ENCODE measurements at regions of chr1 and their contacts with region 1.

Region 1: GRCh38 chr1:39720094-39720999 is 18.3 kb upstream of the PPIE start:
- DNase-seq: no peak
- H3K4me3 ChIP-seq: no peak overlapping the region
- H3K27ac ChIP-seq: no peak overlapping the region
- H3K4me1 ChIP-seq: peaks cover 0 to 3% (median 0%) of the 10 kb centered on the region in 4 donors
- H3K27me3 ChIP-seq: peaks cover 70% of the 10 kb centered on the region
- CTCF ChIP-seq: peak; percentile 65 to 80 (median 78)
- EP300 ChIP-seq: no peak
- POLR2A ChIP-seq: no peak

Region 2: GRCh38 chr1:37931361-37932158 is 1788.8 kb before region 1 on chr1:
- in situ Hi-C with region 1: no loop called
- intact Hi-C with region 1: loop called (anchors 5 kb)
- DNase-seq: peak; percentile 98
- H3K4me3 ChIP-seq: peak overlapping the region; percentile 52 to 97 (median 76)
- H3K27ac ChIP-seq: peak overlapping the region; percentile 70 to 85 (median 73)
- H3K4me1 ChIP-seq: peaks cover 8 to 24% (median 15%) of the 10 kb centered on the region in 4 donors
- H3K27me3 ChIP-seq: no peaks in the 10 kb centered on the region
- CTCF ChIP-seq: no peak
- EP300 ChIP-seq: no peak
- POLR2A ChIP-seq: peak; percentile 50

Region 3: DNA sequence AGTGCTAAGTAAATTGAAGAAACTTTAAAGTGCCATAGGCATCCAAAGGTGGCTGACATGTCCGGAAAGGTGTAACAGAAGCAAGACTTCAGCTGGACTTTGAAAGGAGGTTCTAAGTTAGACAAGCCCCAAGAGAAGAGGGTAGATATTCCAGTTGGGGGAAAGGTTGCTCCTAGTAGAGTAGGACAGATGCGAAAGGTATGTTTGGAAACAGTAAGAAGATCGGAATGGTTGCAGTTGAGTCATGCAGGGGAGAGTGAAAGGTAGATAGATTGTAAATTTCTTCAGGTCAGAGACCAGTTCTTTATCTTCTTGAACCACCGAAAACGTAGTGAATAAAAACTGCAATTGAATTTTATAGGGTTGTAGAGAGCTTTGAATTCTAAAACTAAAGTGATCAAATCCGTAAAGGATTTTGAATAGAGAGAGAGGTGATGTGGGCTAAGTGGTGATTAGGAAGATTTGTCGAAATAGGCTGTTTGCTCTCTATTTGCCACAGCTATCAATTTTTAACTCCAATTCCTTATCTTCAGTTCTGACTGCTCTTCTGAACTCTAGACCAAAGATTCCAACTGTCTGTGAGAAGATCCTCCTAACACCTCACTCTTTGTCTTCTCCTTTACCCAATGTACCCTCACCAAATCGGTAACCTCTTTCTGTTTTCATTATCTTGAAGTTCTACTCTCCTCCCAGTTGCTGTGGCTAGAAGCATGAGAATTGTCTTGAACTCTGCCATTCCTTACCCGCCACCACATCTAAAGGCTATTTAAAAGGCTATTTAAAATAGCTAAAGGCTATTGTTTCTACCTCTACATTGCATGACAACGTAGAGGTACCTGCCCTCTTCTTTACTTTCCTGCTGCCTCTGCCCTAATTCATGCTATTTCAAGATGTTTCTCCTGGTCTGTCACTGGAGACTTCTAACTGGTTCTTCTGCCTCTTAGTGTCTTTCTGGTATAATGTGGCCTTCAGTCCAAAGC is 499.2 kb before region 1 on chr1:
- in situ Hi-C with region 1: no loop called
- intact Hi-C with region 1: no loop called
- DNase-seq: no peak
- H3K4me3 ChIP-seq: no peak overlapping the region
- H3K27ac ChIP-seq: no peak overlapping the region
- H3K4me1 ChIP-seq: peaks cover 0 to 36% (median 8%) of the 10 kb centered on the region in 4 donors
- H3K27me3 ChIP-seq: no peaks in the 10 kb centered on the region
- CTCF ChIP-seq: no peak
- EP300 ChIP-seq: no peak
- POLR2A ChIP-seq: no peak

Region 4: GRCh38 chr1:39588101-39588500 is 132.2 kb before region 1 on chr1:
- in situ Hi-C with region 1: no loop called
- intact Hi-C with region 1: no loop called
- DNase-seq: no peak
- H3K4me3 ChIP-seq: no peak overlapping the region
- H3K27ac ChIP-seq: no peak overlapping the region
- H3K4me1 ChIP-seq: no peaks in the 10 kb centered on the region
- H3K27me3 ChIP-seq: no peaks in the 10 kb centered on the region
- CTCF ChIP-seq: no peak
- EP300 ChIP-seq: no peak
- POLR2A ChIP-seq: no peak

Region 5: DNA sequence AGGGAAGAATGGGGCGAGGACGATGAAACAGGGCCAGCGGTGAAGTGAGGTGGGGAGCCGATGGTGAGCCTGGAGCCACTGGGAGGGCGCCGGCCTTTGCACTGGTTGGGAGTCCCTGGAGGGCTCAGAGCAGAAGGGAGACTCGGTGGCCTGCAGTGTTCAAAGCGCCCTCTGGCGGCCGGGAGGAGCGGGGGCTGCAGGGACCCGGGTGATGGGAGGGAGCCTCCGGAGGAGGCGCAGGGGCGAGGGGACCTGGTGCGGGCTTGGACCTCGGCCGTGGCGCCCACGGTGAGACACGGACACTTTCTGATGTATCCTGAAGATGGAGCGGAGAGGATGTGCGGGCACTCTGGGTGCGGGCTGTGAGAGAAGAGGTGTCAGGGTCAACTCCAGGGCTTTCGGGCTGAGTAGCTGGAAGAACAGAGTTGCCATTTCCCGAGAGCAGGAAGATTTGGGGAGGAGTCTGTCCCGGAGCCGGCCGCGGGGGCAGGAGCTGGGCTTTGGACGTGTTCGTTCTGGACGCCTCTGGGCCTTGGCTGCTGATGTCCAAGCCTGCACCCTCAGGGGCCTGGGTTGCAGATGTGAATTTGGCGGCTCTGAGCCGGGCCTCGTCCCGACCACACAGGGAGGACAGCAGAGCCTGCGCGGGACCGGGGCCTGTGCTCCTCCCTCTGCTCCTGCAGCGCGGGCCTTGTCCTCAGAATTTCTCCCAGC is 110.6 kb before region 1 on chr1:
- in situ Hi-C with region 1: loop called in 3 of 4 experiments (anchors 5 to 10 kb)
- intact Hi-C with region 1: loop called (anchors 5 kb)
- DNase-seq: peak; percentile 66
- H3K4me3 ChIP-seq: no peak overlapping the region
- H3K27ac ChIP-seq: peak overlapping the region in 1 of 4 donors; percentile 8
- H3K4me1 ChIP-seq: peaks cover 0 to 3% (median 0%) of the 10 kb centered on the region in 4 donors
- H3K27me3 ChIP-seq: peaks cover 2% of the 10 kb centered on the region
- CTCF ChIP-seq: peak in 3 of 5 experiments; percentile 53 to 73 (median 62)
- EP300 ChIP-seq: no peak
- POLR2A ChIP-seq: no peak